WTC11 (cell line): ENCODE measurements at regions of chr1 and their contacts with region 1.

Region 1: DNA sequence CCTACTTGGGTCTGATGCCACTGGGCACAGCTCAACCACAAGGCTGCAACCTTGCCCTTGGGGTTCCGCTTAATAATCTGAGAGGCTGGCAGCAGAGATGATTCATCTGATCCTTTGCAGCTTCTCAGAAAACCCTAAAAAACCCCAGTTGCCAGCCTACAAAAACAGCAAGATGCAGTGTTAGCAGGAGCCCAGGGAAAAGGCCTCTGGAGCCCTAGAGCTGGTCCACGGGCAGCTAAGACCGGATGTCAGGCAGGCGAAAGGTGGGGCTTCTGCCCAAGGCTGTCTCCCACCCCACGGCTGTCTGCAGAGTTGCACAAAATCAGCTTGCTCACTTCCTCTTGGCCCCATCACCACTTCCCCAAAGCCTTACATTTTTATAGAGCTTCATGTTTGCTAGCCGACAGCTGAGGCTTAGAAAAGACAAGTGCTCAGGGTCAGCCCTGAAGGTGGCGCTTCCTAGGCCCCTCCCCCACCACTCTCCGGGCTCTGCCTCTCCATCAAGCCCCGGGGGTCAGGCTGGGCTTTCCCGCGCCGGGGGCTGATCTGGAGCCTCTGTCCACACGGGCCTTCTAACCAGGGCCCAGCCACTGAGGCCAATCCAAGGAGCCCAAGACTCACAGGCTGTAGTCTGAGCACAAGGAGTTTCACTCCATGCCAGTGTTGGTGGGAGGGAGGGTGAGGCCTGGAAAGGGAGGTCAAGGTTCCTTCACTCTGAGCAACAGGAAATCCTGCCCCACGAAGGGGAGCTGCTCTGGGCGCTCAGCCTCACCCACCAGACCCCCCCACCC is 4.2 kb upstream of the ADORA3 start:
- DNase-seq: peak; percentile 79
- ATAC-seq: peak; percentile 88
- H3K4me3 Mint-ChIP-seq: peak overlapping the region; percentile 63
- H3K27ac Mint-ChIP-seq: peak overlapping the region; percentile 50; the same call in 1 of the 2 replicates
- H3K4me1 Mint-ChIP-seq: peaks cover 7% of the 10 kb centered on the region
- H3K27me3 Mint-ChIP-seq: no peaks in the 10 kb centered on the region
- CTCF ChIP-seq: no peak

Region 2: DNA sequence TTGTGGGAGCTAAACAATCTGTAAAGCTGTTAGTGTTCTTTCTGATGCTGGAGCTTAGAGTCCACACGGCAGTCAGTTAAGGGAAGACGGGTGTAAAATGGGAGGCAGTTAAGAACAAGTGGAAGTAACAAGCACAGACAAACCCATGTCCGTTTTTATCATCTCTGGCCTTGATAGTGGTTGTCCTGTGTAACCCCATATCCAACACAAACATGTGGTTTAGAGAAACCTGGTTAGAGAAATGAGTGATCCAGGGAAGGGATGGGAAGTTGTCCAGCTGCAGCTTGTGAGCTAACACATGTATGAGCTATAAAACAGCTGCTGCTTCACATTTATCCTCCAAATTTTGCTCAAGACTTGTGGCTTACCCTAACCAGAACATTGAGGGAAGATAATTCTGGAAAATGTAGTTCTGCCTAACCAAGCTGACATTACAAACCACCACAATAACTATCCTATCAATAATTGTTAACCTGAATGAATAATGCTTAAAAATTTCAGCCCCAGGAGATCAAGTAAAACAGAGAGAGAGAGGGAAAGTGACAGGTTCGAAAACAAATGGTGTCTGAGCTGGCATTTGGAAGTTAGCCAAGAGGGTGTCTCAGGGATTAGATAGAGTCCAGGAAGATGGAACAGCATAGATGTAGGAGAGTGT is 44.5 kb before region 1 on chr1:
- CTCF ChIA-PET with region 1: no interaction called
- POLR2A ChIA-PET with region 1: no interaction called
- DNase-seq: no peak
- ATAC-seq: no peak
- H3K4me3 Mint-ChIP-seq: no peak overlapping the region
- H3K27ac Mint-ChIP-seq: no peak overlapping the region; the same call in 1 of the 2 replicates
- H3K4me1 Mint-ChIP-seq: no peaks in the 10 kb centered on the region
- H3K27me3 Mint-ChIP-seq: no peaks in the 10 kb centered on the region
- CTCF ChIP-seq: no peak

Region 3: GRCh38 chr1:111489604-111490003 is 18.0 kb before region 1 on chr1:
- CTCF ChIA-PET with region 1: interaction called, 45 read pairs
- POLR2A ChIA-PET with region 1: no interaction called
- DNase-seq: no peak
- ATAC-seq: no peak
- H3K4me3 Mint-ChIP-seq: no peak overlapping the region
- H3K27ac Mint-ChIP-seq: no peak overlapping the region
- H3K4me1 Mint-ChIP-seq: peaks cover 6% of the 10 kb centered on the region
- H3K27me3 Mint-ChIP-seq: no peaks in the 10 kb centered on the region; the same call in 1 of the 2 replicates
- CTCF ChIP-seq: no peak

Region 4: GRCh38 chr1:111582644-111583618 is 75.3 kb after region 1 on chr1:
- CTCF ChIA-PET with region 1: interaction called, 15 read pairs
- POLR2A ChIA-PET with region 1: no interaction called
- DNase-seq: no peak
- ATAC-seq: no peak
- H3K4me3 Mint-ChIP-seq: no peak overlapping the region
- H3K27ac Mint-ChIP-seq: no peak overlapping the region
- H3K4me1 Mint-ChIP-seq: no peaks in the 10 kb centered on the region
- H3K27me3 Mint-ChIP-seq: no peaks in the 10 kb centered on the region; the same call in 1 of the 2 replicates
- CTCF ChIP-seq: no peak

Region 5: DNA sequence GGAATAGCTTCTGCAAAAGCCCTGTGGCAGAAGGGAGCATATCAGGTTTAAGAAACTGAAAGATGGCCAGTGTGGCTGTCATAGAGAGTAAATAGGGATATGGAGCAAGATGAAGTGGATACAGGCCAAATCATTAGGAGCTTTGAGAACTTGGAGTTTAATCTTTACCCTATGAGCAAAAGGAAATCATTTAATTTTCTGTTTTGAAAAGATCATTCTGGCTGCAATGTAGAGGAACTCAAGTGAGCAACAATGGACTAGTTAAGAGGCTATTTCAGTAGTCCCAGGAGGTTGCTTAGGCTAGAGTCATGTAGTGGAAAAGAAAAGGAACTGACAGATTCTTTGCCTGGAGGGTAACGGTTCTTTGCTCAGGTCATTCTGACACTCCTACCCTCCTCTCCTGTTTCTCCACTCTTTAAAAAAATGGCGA is 159.2 kb after region 1 on chr1:
- CTCF ChIA-PET with region 1: interaction called, 25 read pairs
- POLR2A ChIA-PET with region 1: no interaction called
- DNase-seq: no peak
- ATAC-seq: no peak
- H3K4me3 Mint-ChIP-seq: no peak overlapping the region
- H3K27ac Mint-ChIP-seq: no peak overlapping the region
- H3K4me1 Mint-ChIP-seq: no peaks in the 10 kb centered on the region
- H3K27me3 Mint-ChIP-seq: no peaks in the 10 kb centered on the region
- CTCF ChIP-seq: no peak

Region 6: DNA sequence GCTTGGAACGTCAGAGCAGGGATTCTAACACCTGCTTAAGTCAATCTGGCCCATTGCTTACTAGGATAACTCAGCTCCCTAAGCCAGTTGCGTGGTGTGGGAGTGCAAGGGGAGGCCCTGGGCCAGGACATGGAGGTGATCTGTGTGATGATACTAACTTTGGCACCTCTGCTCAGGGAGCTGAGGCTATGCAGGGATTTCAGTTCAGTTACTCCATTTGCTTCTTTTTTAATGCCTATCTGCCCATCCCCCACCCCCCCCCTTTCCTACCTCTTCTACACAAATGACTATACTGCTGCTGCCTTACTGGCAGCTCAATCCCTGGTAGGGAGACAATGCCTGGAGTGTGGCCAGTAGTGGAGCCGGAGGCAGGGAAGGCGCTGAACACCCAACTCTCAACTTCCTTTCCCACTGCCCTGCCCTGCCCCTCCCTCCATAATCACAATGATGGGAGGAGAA is 212.1 kb after region 1 on chr1:
- CTCF ChIA-PET with region 1: interaction called, 43 read pairs
- POLR2A ChIA-PET with region 1: no interaction called
- DNase-seq: no peak
- ATAC-seq: no peak
- H3K4me3 Mint-ChIP-seq: no peak overlapping the region
- H3K27ac Mint-ChIP-seq: peak overlapping the region; percentile 58
- H3K4me1 Mint-ChIP-seq: peaks cover 44% of the 10 kb centered on the region
- H3K27me3 Mint-ChIP-seq: no peaks in the 10 kb centered on the region
- CTCF ChIP-seq: no peak

Region 7: GRCh38 chr1:111769517-111770146 is 262.0 kb after region 1 on chr1:
- CTCF ChIA-PET with region 1: interaction called, 22 read pairs
- POLR2A ChIA-PET with region 1: no interaction called
- DNase-seq: no peak
- ATAC-seq: no peak
- H3K4me3 Mint-ChIP-seq: no peak overlapping the region
- H3K27ac Mint-ChIP-seq: no peak overlapping the region
- H3K4me1 Mint-ChIP-seq: no peaks in the 10 kb centered on the region
- H3K27me3 Mint-ChIP-seq: no peaks in the 10 kb centered on the region; the same call in 1 of the 2 replicates
- CTCF ChIP-seq: peak; percentile 60